Activated CD4-positive, alpha-beta memory T cell treated with anti-CD3 and anti-CD28 coated beads for 36 hours (primary cell): ENCODE measurements at regions of chr5 and their contacts with region 1.

Region 1: GRCh38 chr5:140113699-140114263 is at the start of gene PURA:
- DNase-seq: peak; percentile 97
- H3K4me3 Mint-ChIP-seq: peak within 1 kb of the TSS; percentile 83
- H3K27ac Mint-ChIP-seq: peak within 1 kb of the TSS; percentile 89
- H3K4me1 Mint-ChIP-seq: peaks cover 68% of the 10 kb centered on the region
- H3K27me3 Mint-ChIP-seq: no peaks in the 10 kb centered on the region
- total RNA-seq, gene PURA: 12.0 to 12.3 TPM

Region 2: GRCh38 chr5:140131967-140132409 is 18.2 kb after region 1 on chr5:
- CTCF ChIA-PET with region 1: interaction called, 6 read pairs
- POLR2A ChIA-PET with region 1: interaction called, 3 read pairs
- intact Hi-C with region 1: loop called (anchors 2 kb)
- DNase-seq: peak; percentile 38
- H3K4me3 Mint-ChIP-seq: no peak overlapping the region
- H3K27ac Mint-ChIP-seq: no peak overlapping the region
- H3K4me1 Mint-ChIP-seq: peaks cover 35% of the 10 kb centered on the region
- H3K27me3 Mint-ChIP-seq: no peaks in the 10 kb centered on the region